Activated CD8-positive, alpha-beta T cell treated with anti-CD3 and anti-CD28 coated beads, Interleukin-2, amount 10 ng/mL, durations not matched to agents 7 days and 5 days (primary cell): ENCODE measurements at regions of chr3 and their contacts with region 1.

Region 1: GRCh38 chr3:60010781-60011180 is 961.0 kb upstream of the CFAP20DC start:
- DNase-seq: peak; percentile 85
- ATAC-seq: peak; percentile 100
- H3K4me3 Mint-ChIP-seq: peak overlapping the region; percentile 64
- H3K27ac Mint-ChIP-seq: peak overlapping the region; percentile 93
- H3K4me1 Mint-ChIP-seq: peaks cover 63% of the 10 kb centered on the region
- H3K27me3 Mint-ChIP-seq: no peaks in the 10 kb centered on the region

Region 2: DNA sequence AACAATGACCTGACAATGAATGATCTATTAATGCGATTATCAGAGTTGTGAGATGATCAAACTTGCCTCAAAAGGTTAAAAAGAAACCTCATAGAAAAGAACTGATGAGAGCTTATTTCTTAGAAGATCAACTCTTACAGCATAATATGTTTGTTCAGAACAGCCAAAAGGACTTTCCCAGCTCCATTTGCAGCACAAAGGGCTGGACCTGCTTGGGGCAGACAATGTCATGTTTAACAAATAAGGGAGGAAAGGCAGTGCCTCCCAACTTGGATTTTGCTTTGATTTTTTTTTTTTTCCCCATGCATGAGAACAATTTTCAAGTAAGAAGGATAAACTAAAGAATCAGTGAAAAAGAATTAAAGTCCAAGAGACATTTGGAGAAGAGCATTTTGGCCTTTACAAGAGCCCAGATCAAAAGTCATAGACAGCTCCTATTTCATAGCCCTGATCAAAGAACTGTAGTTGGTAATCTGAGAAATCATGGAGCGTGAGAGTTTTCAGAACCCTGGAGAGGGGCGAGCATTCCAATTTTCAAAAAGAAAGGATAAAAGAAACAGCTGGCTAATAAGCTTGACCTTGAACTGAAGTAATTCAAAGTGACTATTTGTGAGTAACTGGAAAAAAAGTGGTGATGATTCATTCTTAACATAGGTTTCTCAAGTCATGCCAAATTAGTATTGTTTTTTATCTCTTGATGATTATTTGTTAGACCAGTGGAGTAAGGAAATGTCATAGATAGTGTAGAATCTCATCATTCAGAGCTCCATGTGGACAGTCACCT is 825.0 kb before region 1 on chr3:
- CTCF ChIA-PET with region 1: no interaction called
- POLR2A ChIA-PET with region 1: no interaction called
- DNase-seq: no peak
- ATAC-seq: no peak
- H3K4me3 Mint-ChIP-seq: no peak overlapping the region
- H3K27ac Mint-ChIP-seq: no peak overlapping the region
- H3K4me1 Mint-ChIP-seq: no peaks in the 10 kb centered on the region
- H3K27me3 Mint-ChIP-seq: peaks cover 4% of the 10 kb centered on the region

Region 3: DNA sequence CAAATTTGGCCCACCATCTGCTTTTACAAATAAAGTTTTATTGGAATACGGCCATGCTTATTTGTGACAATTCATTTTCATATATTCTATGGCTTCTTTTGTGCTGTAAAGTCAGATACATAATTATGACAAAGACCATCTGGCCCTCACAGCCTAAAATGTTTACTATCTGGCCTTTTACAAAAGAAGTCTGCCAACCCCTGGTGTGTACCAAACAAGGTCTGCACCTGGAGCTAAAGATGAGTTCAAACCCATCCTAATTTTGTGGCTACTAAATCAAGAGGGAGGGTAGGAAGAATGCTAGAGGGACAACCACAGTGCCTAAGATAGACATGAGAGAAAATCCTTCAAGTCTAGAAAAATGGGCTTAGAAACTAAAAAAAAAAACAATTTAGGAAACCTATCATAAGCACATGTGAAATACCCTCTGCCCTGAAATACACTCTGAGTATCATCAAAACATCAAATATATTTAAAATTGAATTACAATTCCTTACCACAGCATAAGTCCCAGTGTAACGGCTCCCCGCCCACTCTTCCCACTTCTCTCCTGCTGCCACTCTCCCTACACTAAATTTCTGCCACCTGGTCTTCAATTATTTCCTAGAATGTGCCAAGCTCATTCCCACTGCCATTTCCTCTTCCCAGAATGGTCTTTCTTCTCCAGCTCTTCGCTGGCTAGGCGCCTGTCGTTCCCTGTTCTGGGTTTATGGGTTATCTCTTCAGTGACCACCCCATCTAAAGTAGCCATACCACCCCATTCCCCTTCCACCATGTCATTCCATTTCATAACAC is 10.3 kb before region 1 on chr3:
- CTCF ChIA-PET with region 1: interaction called, 17 read pairs
- POLR2A ChIA-PET with region 1: no interaction called
- DNase-seq: no peak
- ATAC-seq: no peak
- H3K4me3 Mint-ChIP-seq: no peak overlapping the region
- H3K27ac Mint-ChIP-seq: no peak overlapping the region
- H3K4me1 Mint-ChIP-seq: peaks cover 41% of the 10 kb centered on the region
- H3K27me3 Mint-ChIP-seq: no peaks in the 10 kb centered on the region